ENCODE measurements at regions of chr7 and their contacts with region 1.

Region 1: GRCh38 chr7:30164567-30164966 is 29.8 kb downstream of the MTURN start:
- DNase-seq: peak; percentile 56
- CTCF ChIP-seq: peak; percentile 52

Region 2: DNA sequence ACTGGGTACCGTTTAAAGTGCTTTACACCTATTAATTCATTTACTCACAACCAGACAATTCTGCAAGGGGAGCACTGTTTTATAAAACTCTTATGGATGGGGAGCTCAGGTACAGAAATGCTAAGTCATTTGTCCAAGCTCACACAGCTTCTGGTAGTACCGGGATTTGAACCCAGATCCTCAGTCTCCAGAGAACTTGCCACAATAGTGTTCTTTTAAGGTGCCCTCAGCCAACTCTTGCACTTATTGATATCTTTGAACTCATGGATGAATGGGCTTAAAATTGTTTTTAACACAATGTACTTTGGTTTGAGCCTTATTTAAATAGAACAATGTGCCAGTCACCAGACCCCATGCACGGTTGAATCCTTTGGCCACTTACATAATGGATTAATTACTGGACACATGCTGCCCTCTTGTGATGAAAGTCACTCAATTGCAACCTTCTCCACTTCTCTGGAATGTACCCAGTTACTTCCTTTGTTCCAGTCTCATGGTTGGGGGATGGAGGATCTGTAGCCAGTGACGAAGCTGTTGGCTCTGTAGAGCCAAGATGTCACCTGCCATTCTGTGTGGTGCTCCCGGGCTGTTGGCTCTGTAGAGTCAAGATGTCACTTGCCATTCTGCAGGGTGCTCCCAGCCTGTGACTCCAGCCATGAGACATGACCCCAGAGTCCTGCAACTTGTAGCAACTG is 248.4 kb after region 1 on chr7:
- in situ Hi-C with region 1: loop called (anchors 25 kb)
- DNase-seq: peak; percentile 57
- CTCF ChIP-seq: no peak

Region 3: DNA sequence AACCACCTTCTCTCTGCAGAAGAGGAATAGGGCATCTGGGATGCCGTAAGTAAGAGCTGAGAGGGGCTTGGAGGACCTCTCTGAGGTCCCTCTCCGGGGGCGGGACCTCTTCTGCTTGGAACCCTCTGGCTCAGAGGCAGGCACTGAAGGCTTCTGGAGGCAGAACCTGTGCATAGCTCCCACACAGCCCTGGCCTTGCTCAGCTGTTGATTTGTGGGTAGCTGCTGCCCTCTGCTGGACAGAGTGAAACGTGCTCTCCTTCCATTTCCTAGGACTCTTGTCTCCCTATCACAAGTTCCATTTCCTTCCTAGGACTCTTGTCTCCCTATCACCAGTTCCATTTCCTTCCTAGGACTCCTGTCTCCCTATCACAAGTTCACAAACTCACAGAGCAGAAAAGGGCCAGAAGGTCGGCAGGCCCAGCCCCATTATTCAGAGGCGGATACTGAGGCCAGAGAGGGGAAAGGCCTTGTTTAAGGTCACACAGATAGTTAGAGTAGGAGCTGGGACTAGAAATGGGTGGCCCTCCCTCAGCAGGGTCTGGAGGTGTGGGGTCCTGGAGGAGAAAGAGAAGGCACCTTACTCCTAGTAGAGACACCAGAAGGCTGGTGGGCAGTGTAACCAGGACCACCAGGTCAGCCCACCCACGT is 399.8 kb after region 1 on chr7:
- in situ Hi-C with region 1: loop called (anchors 25 kb)
- DNase-seq: peak; percentile 83
- CTCF ChIP-seq: peak; percentile 83